SK-N-SH (cell line): ENCODE measurements at regions of chr19 and their contacts with region 1.

Region 1: DNA sequence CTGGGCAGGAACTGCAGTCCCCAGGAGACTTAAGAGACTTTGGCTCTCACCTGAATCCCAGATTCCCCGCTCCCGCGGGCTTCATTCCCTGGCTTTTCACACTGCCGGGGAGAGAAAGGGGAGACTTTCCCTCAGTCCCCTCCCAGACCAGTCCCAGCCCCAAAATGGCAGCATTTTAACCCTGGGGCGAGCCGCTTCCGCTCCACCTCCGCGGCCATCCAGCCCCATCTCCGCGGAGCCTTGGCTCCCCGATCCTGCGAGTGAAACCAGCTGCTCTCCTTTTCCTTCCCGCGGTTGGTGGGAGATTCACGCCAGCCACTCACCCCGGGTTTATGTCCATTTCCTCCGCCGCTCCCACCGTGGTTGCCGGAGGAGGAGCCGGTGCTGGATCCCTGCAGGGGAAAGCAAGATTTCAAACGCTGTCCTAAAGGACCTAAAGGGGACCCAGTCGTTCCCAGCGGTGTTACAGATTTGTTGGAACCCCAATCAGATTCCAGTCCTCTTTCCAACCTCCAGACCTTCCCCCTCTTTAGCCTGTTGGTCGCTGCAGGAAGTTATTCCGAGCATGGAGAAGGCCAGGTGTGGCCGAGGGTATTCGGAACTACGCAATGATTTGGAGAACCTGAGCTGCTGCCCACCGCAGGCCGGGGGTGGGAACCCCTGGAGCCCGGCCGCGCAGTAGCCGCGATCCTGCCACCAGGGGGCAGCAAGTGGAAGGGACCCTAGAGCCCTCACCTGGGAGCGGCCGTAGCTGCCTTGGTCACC is 3.4 kb downstream of the DMKN start:
- DNase-seq: peak; percentile 90
- H3K4me3 ChIP-seq: peak overlapping the region in 1 of 2 experiments; percentile 46; a peak in 1 of 4 replicates
- H3K27ac ChIP-seq: no peak overlapping the region
- H3K4me1 ChIP-seq: no peaks in the 10 kb centered on the region; a peak in 2 of 4 replicates
- H3K27me3 ChIP-seq: peaks cover 86% of the 10 kb centered on the region
- CTCF ChIP-seq: peak; percentile 88
- EP300 ChIP-seq: no peak
- RAD21 ChIP-seq: peak; percentile 42

Region 2: DNA sequence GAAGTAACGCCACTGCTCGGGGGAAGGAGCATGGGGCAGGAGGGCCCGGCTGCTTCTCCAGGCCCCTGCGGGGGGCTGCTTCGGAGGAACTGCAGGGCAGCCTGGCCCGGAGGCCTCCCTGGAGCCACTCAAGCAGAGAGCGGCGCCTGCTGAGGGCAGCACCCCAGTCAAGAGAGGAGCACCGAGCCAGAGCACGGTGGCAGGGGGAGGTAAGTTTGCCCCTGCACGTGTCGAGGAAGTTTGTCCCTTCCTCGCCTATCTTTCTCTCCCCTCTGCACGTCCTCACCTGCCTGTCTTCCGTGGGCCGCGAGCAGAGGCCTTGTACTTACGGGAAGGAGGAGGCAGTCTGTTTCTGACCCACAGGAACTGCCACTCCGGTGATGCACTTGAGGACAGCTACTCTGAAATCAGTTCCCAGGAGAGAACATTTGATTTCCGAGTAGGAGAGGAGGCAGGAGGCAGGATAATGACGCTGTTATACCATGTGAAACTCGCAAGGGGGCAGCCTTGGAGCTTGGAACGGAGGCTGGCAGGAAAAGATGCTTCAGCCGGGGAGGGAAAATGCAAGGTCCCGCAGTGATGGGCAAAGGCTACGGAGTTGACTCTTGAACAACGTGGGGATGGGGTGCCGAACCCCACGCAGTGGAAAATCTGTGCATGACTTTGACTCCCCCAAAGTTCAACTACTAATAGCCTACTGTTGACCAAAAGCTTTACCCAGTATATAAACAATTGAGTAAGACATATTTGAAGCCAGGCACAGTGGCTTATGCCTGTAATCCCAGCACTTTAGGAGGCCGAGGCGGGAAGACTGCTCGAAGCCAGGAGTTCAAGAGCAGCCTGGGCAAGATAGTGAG is 157.4 kb before region 1 on chr19:
- CTCF ChIA-PET with region 1: interaction called, 16 read pairs
- POLR2A ChIA-PET with region 1: no interaction called
- DNase-seq: peak; percentile 85
- H3K4me3 ChIP-seq: no peak overlapping the region
- H3K27ac ChIP-seq: no peak overlapping the region
- H3K4me1 ChIP-seq: peaks cover 0 to 3% of the 10 kb centered on the region in 2 experiments; a peak in 1 of 4 replicates
- H3K27me3 ChIP-seq: peaks cover 80% of the 10 kb centered on the region
- CTCF ChIP-seq: peak; percentile 80
- EP300 ChIP-seq: no peak
- RAD21 ChIP-seq: peak; percentile 91

Region 3: DNA sequence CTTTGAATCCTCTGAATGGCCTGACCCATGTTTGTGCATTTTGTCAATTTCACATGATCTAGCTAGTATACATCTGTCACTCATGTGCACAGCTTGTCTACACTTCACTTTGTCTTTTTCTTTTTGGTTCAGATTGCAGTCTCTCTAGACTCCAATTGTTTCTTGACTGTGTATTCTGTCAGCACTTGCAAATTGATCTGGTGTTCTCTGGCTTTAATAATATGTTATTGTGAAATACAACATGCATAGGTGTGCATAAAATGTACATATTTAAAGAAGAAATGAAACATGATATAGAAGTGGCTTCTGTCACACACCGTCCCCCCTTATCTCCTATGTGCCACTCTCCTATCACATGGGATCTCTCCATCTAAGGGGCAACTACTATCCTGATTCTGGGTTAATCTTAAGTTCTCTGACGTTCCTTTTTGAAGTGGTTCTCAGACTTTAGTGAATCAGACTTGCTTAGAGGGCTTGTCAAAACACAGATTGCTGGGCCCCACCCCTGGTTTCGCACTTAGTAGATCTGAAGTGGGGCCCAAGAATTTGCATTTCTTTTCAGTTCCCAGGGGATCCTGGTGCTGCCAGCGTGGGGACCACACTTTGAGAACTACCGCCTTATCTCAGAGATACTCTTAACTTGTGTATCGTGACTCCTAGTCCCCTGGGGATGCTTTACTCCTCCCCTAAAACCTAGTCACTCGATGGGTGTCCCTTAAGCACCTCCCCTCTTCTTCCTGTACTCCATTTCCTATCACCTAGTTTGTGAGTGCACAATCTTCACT is 25.6 kb before region 1 on chr19:
- CTCF ChIA-PET with region 1: interaction called, 13 read pairs
- POLR2A ChIA-PET with region 1: no interaction called
- DNase-seq: no peak
- H3K4me3 ChIP-seq: no peak overlapping the region
- H3K27ac ChIP-seq: no peak overlapping the region
- H3K4me1 ChIP-seq: no peaks in the 10 kb centered on the region; a peak in 1 of 4 replicates
- H3K27me3 ChIP-seq: peaks cover 59% of the 10 kb centered on the region
- CTCF ChIP-seq: no peak
- EP300 ChIP-seq: no peak
- RAD21 ChIP-seq: no peak

Region 4: GRCh38 chr19:35495107-35496064 is 14.7 kb before region 1 on chr19:
- CTCF ChIA-PET with region 1: interaction called, 127 read pairs
- POLR2A ChIA-PET with region 1: no interaction called
- DNase-seq: peak; percentile 87
- H3K4me3 ChIP-seq: no peak overlapping the region
- H3K27ac ChIP-seq: no peak overlapping the region
- H3K4me1 ChIP-seq: peaks cover 0 to 2% of the 10 kb centered on the region in 2 experiments; a peak in 1 of 4 replicates
- H3K27me3 ChIP-seq: peaks cover 89% of the 10 kb centered on the region
- CTCF ChIP-seq: peak; percentile 81
- EP300 ChIP-seq: no peak
- RAD21 ChIP-seq: peak; percentile 67

Region 5: DNA sequence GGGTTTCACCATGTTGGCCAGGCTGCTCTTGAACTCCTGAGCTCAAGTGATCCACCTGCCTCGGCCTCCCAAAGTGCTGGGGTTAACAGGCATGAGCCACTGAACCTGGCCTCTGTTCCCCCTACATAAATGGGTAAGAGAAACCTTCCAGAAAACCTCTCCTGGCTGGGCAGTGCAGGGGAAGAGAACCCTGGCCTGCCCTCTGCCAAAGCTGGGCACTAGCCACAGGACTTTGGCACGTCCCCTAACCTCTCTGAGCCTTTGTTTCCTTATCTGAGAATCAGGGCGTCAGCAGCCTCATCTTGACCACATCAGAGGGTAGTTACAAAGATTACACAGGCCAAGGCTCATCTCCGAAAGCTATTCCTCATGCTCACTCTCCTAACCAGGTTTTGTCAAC is 15.8 kb after region 1 on chr19:
- CTCF ChIA-PET with region 1: interaction called, 17 read pairs
- POLR2A ChIA-PET with region 1: interaction called, 4 read pairs
- DNase-seq: no peak
- H3K4me3 ChIP-seq: no peak overlapping the region
- H3K27ac ChIP-seq: no peak overlapping the region
- H3K4me1 ChIP-seq: no peaks in the 10 kb centered on the region
- H3K27me3 ChIP-seq: peaks cover 52% of the 10 kb centered on the region
- CTCF ChIP-seq: no peak
- EP300 ChIP-seq: no peak
- RAD21 ChIP-seq: no peak

Region 6: GRCh38 chr19:35531291-35531690 is 21.2 kb after region 1 on chr19:
- CTCF ChIA-PET with region 1: interaction called, 12 read pairs
- POLR2A ChIA-PET with region 1: no interaction called
- DNase-seq: no peak
- H3K4me3 ChIP-seq: no peak overlapping the region
- H3K27ac ChIP-seq: no peak overlapping the region
- H3K4me1 ChIP-seq: no peaks in the 10 kb centered on the region; a peak in 1 of 4 replicates
- H3K27me3 ChIP-seq: peaks cover 82% of the 10 kb centered on the region
- CTCF ChIP-seq: no peak
- EP300 ChIP-seq: no peak
- RAD21 ChIP-seq: no peak

Region 7: GRCh38 chr19:35544110-35544802 is 34.2 kb after region 1 on chr19:
- CTCF ChIA-PET with region 1: interaction called, 20 read pairs
- POLR2A ChIA-PET with region 1: no interaction called
- DNase-seq: no peak
- H3K4me3 ChIP-seq: peak overlapping the region; percentile 79 to 96
- H3K27ac ChIP-seq: no peak overlapping the region; a peak in 1 of 4 replicates
- H3K4me1 ChIP-seq: peaks cover 5 to 19% of the 10 kb centered on the region in 2 experiments; a peak in 2 of 4 replicates
- H3K27me3 ChIP-seq: no peaks in the 10 kb centered on the region
- CTCF ChIP-seq: no peak
- EP300 ChIP-seq: no peak
- RAD21 ChIP-seq: no peak